Dendritic cell treated with granulocyte-macrophage colony-stimulating factor and Interleukin-4, amounts not matched to agents 40 ng/mL and 50 ng/mL, for 4 days (primary cell): ENCODE measurements at regions of chr4 and their contacts with region 1.

Region 1: DNA sequence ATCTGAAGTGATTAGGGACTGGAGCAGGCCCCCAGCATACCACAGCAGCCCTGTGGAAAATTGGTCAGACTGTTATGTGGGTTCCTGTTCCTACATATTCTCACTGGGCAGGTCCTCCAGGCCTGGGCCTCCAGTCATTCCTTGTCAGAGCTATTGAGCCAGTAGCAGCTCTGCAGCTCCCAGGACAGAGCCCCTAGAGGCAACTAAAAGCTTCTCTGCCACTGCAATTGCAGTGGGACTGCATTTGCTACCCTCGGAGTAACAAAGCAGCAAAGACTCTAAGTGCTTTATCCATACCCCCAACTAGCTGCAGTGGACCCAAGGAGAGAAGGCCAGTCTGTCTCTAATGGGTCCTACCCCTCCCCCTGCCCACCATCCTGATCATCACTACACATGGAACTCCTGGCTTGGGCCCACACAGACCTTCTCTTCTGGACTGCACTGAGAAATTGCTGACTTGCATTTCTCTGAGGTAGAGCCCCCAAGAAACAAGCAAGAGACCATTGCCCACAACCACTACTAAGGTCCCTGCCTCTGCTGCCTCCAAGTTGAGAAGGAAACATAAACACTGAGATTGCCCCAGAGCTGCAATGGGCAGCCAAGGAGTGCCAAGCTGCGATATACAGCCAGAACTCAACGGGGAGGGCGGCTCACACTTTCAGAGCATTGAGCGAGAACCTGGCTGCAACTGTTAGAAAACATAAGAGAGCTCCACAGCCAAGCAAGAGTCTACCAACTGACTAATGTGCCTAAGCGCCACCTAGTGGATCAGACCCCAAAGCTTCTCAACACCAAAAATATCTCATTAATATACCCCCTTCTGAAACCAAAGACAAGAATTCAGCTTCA is 738.7 kb upstream of the NDST4 start:
- H3K4me3 Mint-ChIP-seq: no peak overlapping the region
- H3K27ac Mint-ChIP-seq: no peak overlapping the region
- H3K4me1 Mint-ChIP-seq: no peaks in the 10 kb centered on the region
- H3K27me3 Mint-ChIP-seq: no peaks in the 10 kb centered on the region

Region 2: DNA sequence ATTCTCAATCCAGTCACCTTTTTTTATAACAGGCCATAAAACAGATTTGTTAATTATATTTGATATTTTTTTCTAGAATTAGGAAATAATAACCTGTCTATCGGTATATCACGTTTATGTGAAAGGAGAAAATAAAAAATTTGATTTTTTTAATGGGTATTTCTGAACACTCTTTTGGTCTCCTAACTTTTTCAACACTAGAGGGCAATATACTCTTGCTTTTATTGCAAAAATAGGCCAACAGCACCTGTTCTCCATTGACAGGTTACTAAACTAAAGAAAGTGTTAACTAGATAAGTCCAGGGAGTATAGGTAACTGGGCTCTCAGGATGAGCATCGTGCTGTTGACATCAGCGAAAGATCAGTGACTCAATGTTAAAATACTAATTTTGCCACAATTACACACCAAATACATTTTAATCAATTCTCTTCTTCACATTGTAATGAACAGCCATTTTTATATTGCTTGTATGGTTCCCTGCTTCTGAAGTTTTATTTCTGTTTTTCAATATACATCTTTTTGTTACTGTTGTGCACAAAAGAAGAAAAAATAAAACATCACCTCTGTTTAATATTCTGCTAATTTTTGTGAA is 761.6 kb before region 1 on chr4:
- intact Hi-C with region 1: loop called (anchors 10 kb)
- H3K4me3 Mint-ChIP-seq: no peak overlapping the region
- H3K27ac Mint-ChIP-seq: no peak overlapping the region
- H3K4me1 Mint-ChIP-seq: no peaks in the 10 kb centered on the region
- H3K27me3 Mint-ChIP-seq: no peaks in the 10 kb centered on the region

Region 3: GRCh38 chr4:115234405-115235093 is 617.6 kb before region 1 on chr4:
- intact Hi-C with region 1: loop called (anchors 1 kb)
- H3K4me3 Mint-ChIP-seq: no peak overlapping the region
- H3K27ac Mint-ChIP-seq: no peak overlapping the region
- H3K4me1 Mint-ChIP-seq: peaks cover 8% of the 10 kb centered on the region
- H3K27me3 Mint-ChIP-seq: no peaks in the 10 kb centered on the region